ENCODE measurements at regions of chr4 and their contacts with region 1.

Region 1: DNA sequence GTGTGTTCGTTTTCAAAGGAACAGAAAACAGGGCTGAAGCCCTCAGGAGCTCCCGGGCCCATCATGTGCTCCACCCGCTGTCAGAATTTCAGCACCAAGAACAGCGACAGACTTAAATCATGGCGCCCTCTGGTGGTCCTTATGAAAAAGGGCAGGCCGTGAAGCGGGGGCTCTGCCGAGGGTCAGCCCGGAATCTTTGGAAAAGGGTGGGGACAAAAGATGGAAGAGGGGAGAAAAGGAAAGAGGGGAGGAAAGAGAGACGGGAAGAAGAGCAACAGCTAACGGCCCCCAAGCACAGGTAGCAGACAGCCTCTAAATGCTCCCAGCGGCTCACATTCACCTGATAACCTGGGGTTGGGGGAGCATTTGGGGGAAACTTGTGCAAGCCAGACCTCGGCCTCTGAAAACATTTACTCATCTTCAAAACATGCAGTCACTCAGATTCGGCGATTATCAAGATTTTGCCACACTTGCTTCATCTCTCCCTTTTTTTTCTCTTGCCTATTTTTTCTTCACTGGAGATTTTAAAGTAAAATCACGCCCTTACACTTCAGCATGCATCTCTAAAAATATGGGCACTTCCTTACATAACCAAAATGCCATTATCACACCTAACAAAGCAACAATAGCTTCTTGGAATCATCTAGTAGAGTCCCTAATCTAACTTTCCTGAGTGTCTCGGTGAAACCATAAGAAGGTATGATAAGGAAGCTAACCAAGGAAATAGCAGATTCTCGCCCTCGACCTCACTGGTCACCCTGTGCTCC is 28.1 kb upstream of the MAN2B2 start:
- DNase-seq: peak; percentile 78
- CTCF ChIP-seq: peak; percentile 94

Region 2: DNA sequence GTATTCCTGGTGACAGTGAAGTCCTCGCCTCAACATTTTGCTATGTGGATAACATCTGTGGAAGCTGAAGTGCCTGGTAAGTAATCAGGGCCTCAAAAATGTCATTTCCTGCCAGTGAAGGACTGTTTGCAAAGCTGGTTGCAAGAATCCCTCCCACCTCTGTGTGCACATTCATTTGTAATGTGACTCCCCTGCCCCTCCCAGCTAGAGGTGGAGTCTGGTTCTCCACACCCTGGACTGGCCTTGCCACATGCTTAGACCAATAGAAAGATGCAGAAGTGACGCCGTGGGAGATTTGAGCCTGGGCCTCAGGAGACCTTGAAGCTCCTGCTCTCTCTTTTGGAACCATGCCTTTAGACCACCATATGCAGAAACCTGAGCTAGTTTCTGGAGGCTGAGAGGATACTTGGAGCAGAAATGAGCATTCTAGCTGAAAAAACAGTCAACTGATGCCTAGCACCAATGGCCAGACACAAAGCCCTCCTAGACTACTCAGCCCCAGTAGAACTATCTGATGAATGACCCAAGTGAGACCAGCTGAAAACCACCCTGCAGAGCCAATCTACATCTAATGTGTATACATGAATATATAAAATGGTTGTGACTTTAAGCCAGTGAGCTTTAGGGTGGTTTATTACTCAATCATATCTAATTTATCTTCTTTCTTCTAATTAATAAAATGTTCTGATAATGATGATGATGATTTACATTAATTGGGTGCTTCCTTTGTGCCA is 606.2 kb before region 1 on chr4:
- CTCF ChIA-PET with region 1: no interaction called
- POLR2A ChIA-PET with region 1: no interaction called
- DNase-seq: no peak
- CTCF ChIP-seq: no peak

Region 3: DNA sequence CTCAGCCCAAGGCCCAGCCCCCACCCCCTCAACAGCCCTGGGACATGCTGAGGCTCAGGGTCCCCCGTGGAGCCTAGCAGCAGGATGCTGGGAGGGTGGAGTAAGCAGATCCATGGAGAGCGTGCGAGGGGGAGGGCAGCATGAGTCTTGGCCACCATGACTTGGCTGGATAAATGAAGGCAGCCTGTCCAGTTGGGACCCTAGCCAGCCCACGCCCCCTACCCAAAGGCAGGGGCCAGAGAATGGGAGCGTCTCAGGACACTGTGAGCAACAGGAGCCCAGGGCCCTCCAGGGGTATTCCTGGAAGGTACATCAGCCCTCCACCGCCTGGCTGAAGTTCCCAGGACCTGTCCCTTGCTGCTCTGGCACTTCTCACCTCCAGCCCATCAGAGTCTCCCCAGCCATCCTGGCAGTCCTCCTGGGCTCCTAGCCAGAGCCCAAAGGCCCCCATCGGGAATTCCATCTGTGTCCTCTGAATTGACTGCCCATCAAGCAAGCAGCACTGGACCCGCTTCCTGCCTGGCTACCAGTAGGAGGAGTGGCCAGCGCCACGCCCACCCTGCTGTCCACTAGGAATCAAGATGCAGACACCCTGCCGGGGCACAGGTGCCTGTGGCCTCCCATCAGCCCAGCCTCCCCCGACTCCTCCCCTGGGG is 576.0 kb before region 1 on chr4:
- CTCF ChIA-PET with region 1: no interaction called
- POLR2A ChIA-PET with region 1: no interaction called
- DNase-seq: no peak
- CTCF ChIP-seq: no peak

Region 4: GRCh38 chr4:6535329-6535692 is 11.6 kb before region 1 on chr4:
- CTCF ChIA-PET with region 1: no interaction called
- POLR2A ChIA-PET with region 1: no interaction called
- DNase-seq: no peak
- CTCF ChIP-seq: no peak

Region 5: GRCh38 chr4:6562931-6563901 is 16.4 kb after region 1 on chr4:
- CTCF ChIA-PET with region 1: interaction called, 21 read pairs
- POLR2A ChIA-PET with region 1: no interaction called
- DNase-seq: no peak
- CTCF ChIP-seq: no peak

Region 6: GRCh38 chr4:6574747-6575502 is 28.1 kb after region 1 on chr4 and contains the start of gene MAN2B2:
- CTCF ChIA-PET with region 1: interaction called, 19 read pairs
- POLR2A ChIA-PET with region 1: no interaction called
- DNase-seq: peak; percentile 97
- CTCF ChIP-seq: no peak

Measured in GM10248 (cell line).